ENCODE measurements at regions of chr5 and their contacts with region 1.

Region 1: GRCh38 chr5:138615461-138615860 is 40.3 kb upstream of the HSPA9 start:
- DNase-seq: no peak
- CTCF ChIP-seq: no peak

Region 2: GRCh38 chr5:138568061-138568824 is 47.2 kb before region 1 on chr5:
- CTCF ChIA-PET with region 1: no interaction called
- POLR2A ChIA-PET with region 1: no interaction called
- DNase-seq: no peak
- CTCF ChIP-seq: no peak

Region 3: DNA sequence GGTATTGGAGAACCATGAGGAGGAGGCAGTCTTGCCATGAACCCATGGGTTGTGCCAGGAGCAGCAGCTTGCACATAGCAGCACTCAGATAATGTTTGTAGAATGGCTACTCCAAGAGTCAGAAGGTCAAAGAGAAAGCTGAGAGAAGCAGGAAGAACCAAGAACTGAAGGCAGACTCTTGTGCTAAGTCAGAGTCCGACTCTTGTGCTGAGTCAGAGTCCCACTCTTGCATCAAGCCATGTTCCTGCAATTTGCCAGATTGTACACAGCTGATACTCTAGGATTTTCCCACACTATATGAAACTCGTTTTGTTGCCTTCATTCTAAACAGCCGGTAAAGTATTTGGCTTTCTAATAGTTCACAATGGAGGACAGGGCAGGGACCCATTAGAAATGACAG is 14.0 kb before region 1 on chr5:
- CTCF ChIA-PET with region 1: interaction called, 11 read pairs
- POLR2A ChIA-PET with region 1: no interaction called
- DNase-seq: no peak
- CTCF ChIP-seq: no peak

Region 4: DNA sequence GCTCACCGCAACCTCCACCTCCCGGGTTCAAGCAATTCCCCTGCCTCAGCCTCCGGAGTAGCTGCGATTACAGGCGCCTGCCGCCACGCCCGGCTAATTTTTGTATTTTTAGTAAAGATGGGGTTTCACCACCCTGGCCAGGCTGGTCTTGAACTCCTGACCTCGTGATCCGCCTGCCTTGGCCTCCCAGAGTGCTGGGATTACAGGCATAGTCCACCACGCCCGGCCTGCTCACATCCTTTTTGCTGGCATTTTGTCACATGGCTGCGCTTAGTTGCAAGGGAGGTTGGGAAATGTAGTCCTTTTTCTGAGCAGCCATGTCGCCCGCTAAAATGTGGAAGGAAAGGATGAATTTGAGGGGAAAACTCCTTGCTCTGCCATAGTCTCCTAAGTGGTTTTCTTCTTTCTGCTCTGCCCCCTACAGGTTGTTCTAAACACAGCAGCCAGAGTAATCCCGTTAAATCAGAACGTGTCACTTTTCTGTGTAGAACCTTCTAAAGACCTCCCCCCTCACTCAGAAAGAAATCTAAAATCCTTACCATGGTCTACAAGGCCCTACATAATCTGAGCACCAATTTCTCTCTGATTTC is 17.5 kb after region 1 on chr5:
- CTCF ChIA-PET with region 1: interaction called, 12 read pairs
- POLR2A ChIA-PET with region 1: no interaction called
- DNase-seq: peak; percentile 46
- CTCF ChIP-seq: peak; percentile 41

Region 5: GRCh38 chr5:138809391-138809790 is 193.9 kb after region 1 on chr5:
- CTCF ChIA-PET with region 1: no interaction called
- POLR2A ChIA-PET with region 1: no interaction called
- DNase-seq: no peak
- CTCF ChIP-seq: no peak